IMR-90 (cell line): ENCODE measurements at regions of chr1 and their contacts with region 1.

Region 1: DNA sequence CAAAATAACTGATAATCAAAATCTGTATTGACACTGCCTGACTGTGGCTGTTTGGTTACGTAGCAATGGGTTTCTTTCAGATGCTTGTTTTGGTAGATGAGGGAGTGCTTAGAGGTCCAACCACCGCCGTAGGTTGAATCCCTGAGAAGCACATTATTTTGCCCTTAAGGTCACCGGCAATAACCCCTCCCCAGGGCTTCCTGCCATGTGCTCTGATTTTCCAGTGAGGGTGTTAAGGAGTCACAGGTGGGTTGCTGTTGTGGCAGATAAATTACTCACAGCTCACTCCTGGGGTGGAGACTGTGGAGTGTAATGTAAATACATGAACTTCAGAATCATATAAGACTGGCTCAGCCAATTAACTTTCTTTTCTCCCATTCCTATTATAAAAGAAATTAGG is 81.5 kb upstream of the ZP4 start:
- DNase-seq: no peak
- ATAC-seq: no peak
- H3K4me3 ChIP-seq: no peak overlapping the region
- H3K27ac ChIP-seq: no peak overlapping the region
- H3K4me1 ChIP-seq: no peaks in the 10 kb centered on the region
- H3K27me3 ChIP-seq: no peaks in the 10 kb centered on the region
- CTCF ChIP-seq: no peak
- POLR2A ChIP-seq: no peak
- RAD21 ChIP-seq: no peak

Region 2: GRCh38 chr1:238088560-238089290 is 116.5 kb after region 1 on chr1:
- CTCF ChIA-PET with region 1: no interaction called
- POLR2A ChIA-PET with region 1: no interaction called
- dilution Hi-C with region 1: no loop called
- in situ Hi-C with region 1: no loop called
- intact Hi-C with region 1: no loop called
- DNase-seq: no peak
- ATAC-seq: no peak
- H3K4me3 ChIP-seq: no peak overlapping the region
- H3K27ac ChIP-seq: no peak overlapping the region
- H3K4me1 ChIP-seq: no peaks in the 10 kb centered on the region
- H3K27me3 ChIP-seq: no peaks in the 10 kb centered on the region
- CTCF ChIP-seq: no peak
- POLR2A ChIP-seq: no peak
- RAD21 ChIP-seq: no peak

Region 3: DNA sequence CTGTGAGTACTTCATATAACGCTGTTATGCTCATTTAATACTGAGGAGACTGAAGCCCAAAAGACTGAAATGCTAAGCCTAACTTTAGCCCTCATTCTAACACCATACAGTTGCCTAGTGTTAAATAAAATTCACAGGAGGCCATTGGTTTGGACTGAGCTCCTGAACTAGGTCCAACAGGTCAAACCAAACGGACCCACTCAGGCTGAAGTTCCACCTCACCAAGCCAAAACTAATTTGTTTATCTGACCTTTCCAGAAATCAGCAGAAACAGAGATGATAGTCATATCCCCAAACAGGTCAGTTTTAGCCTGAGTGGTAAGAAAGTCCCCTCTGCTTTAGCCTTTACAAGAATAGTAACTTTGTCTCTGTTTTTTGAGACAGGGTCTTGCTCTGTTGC is 229.8 kb after region 1 on chr1:
- CTCF ChIA-PET with region 1: no interaction called
- POLR2A ChIA-PET with region 1: no interaction called
- dilution Hi-C with region 1: no loop called
- in situ Hi-C with region 1: no loop called
- intact Hi-C with region 1: loop called (anchors 5 kb)
- DNase-seq: no peak
- ATAC-seq: no peak
- H3K4me3 ChIP-seq: no peak overlapping the region
- H3K27ac ChIP-seq: no peak overlapping the region
- H3K4me1 ChIP-seq: no peaks in the 10 kb centered on the region
- H3K27me3 ChIP-seq: no peaks in the 10 kb centered on the region
- CTCF ChIP-seq: no peak
- POLR2A ChIP-seq: no peak
- RAD21 ChIP-seq: no peak

Region 4: DNA sequence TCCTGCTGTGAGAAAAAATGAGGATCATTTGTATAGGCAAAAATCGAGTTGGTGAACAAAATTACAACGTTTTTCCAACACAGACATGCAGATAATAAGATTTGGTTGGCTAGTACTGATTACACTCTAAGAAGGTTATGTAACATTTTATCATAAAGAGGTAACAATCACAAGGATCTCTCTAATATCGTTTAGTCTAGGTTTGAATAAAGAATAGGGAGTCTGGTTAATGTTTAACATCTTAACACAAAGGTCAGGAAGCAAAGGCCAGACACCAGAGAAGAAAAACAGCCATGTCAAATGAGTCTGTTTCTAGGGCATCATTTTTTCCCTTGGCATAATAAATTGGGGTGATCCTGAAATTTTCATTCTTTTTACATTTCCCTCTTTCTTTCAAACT is 1206.8 kb after region 1 on chr1:
- CTCF ChIA-PET with region 1: no interaction called
- POLR2A ChIA-PET with region 1: no interaction called
- dilution Hi-C with region 1: no loop called
- in situ Hi-C with region 1: no loop called
- intact Hi-C with region 1: no loop called
- DNase-seq: no peak
- ATAC-seq: no peak
- H3K4me3 ChIP-seq: no peak overlapping the region
- H3K27ac ChIP-seq: no peak overlapping the region
- H3K4me1 ChIP-seq: no peaks in the 10 kb centered on the region
- H3K27me3 ChIP-seq: no peaks in the 10 kb centered on the region
- CTCF ChIP-seq: no peak
- POLR2A ChIP-seq: no peak
- RAD21 ChIP-seq: no peak